Heart left ventricle (tissue), 16 donors: ENCODE measurements at regions of chrX and their contacts with region 1.

Region 1: GRCh38 chrX:136268051-136269048 is 17.1 kb upstream of the MAP7D3 start:
- DNase-seq: peak in 2 of 5 donors; percentile 25 to 28
- ATAC-seq: peak in 3 of 4 donors; percentile 45 to 63 (median 49)
- H3K4me3 ChIP-seq: no peak overlapping the region
- H3K27ac ChIP-seq: no peak overlapping the region
- H3K4me1 ChIP-seq: no peaks in the 10 kb centered on the region
- H3K27me3 ChIP-seq: peaks cover 0 to 5% (median 0%) of the 10 kb centered on the region in 9 donors
- CTCF ChIP-seq: peak; percentile 59 to 82 (median 69)
- POLR2A ChIP-seq: no peak

Region 2: DNA sequence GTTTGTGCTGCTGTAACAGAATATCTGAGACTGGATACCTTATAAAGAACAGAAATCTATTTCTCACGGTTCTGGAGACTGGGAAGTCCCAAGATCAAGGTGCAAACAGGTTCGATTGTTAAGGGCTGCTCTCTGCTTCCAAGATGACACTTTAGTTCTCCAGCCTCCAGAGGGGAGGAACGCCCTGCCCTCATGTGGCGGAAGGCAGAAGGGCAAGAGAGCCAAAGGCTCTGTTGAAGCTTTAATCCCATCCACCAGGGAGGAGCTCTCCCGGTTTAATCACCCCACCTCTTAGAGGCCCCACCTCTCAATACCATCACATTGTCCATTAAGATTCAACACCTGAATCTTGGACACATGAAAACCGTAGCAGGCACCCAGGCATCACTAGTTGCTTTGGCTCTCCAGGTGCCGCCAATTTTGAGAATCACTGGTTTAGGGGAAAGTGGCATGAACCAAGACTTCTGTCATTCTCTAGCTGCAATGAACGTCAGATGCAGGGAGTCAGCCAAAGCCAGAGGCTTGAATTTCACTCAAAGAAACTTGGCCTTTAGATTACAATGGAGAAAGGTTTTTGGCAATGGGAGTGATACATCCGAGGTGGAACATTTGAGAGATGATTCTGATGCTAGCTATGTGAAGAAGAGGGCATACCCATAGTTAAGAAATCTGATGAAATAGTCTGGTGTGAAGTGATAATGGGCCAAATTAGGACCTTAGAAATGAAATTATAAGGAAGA is 105.3 kb before region 1 on chrX:
- intact Hi-C with region 1: loop called in 5 of 10 experiments (anchors 2 to 10 kb)
- DNase-seq: peak; percentile 47 to 70 (median 63)
- ATAC-seq: peak; percentile 41 to 80 (median 78)
- H3K4me3 ChIP-seq: peak overlapping the region in 1 of 12 donors; percentile 0
- H3K27ac ChIP-seq: peak overlapping the region in 10 of 12 donors; percentile 9 to 87 (median 56)
- H3K4me1 ChIP-seq: peaks cover 0 to 76% (median 11%) of the 10 kb centered on the region in 12 donors
- H3K27me3 ChIP-seq: peaks cover 0 to 8% (median 0%) of the 10 kb centered on the region in 9 donors
- CTCF ChIP-seq: peak; percentile 47 to 78 (median 66)
- POLR2A ChIP-seq: no peak

Region 3: DNA sequence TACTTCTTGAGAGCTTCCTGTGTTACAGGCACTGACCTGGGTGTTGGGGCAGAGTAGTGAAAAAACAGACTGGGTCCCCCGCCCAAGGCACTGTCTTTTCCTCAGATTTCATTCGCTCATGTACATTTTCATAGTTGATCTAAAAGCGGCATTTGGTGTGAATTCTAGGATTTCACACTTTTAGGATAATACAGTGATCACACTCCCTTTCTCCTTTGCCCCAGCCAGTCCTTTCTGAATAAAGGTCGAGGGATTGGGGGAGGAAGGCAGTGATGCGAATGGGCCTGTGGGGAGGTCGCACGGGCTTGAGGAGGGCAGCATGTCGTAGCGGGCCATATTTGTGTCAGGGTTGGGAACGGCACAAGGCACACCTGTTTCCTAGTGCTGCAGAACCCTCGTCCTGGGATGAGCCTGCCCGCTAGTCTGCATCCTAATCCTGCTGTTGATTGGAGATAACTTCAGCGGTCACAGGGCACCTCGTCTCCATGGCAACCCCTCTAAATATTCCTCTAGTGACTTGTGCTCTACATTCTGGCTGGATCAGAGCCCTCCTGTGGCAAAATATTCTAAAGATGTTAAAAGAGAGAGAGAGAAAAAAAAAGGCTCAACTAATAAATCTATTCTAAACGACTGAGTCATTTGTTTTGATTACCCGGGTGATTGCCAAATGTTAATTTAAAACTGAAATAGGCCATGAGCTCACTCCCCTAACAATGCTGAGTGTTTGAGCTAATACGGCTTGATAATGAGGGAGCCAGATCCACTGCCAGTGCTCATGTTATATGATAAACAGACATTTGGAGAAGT is 99.2 kb before region 1 on chrX:
- intact Hi-C with region 1: loop called in 7 of 10 experiments (anchors 2 to 10 kb)
- DNase-seq: peak; percentile 53 to 75 (median 63)
- ATAC-seq: peak; percentile 83 to 87 (median 84)
- H3K4me3 ChIP-seq: peak overlapping the region in 8 of 12 donors; percentile 7 to 37 (median 18)
- H3K27ac ChIP-seq: peak overlapping the region; percentile 63 to 95 (median 83)
- H3K4me1 ChIP-seq: peaks cover 0 to 69% (median 24%) of the 10 kb centered on the region in 12 donors
- H3K27me3 ChIP-seq: peaks cover 0 to 8% (median 0%) of the 10 kb centered on the region in 9 donors
- CTCF ChIP-seq: peak in 1 of 12 donors; percentile 4
- POLR2A ChIP-seq: no peak

Region 4: DNA sequence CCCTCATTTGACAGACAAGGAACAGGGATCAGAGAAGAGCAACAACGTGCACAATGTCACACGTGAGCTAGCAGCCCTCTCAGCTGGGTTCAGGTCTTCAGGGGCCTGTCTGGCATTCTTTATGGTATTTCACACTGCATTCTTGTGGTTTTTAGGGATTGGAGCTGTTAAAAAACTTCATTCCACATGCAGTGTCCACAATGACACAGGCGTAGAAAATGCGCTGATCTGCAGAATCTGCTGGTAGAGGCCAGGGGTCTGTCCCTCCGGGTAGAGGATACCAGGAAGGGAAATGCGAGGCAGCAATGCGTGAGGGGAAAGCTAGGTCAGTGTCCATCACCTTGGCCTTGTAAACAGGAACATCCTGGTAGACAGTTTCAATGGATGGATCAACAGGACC is 53.8 kb before region 1 on chrX:
- intact Hi-C with region 1: loop called in 2 of 10 experiments (anchors 5 to 10 kb)
- DNase-seq: no peak
- ATAC-seq: no peak
- H3K4me3 ChIP-seq: no peak overlapping the region
- H3K27ac ChIP-seq: peak overlapping the region in 2 of 12 donors; percentile 29 to 44
- H3K4me1 ChIP-seq: peaks cover 0 to 22% (median 0%) of the 10 kb centered on the region in 12 donors
- H3K27me3 ChIP-seq: peaks cover 0 to 11% (median 0%) of the 10 kb centered on the region in 9 donors
- CTCF ChIP-seq: no peak
- POLR2A ChIP-seq: no peak

Region 5: DNA sequence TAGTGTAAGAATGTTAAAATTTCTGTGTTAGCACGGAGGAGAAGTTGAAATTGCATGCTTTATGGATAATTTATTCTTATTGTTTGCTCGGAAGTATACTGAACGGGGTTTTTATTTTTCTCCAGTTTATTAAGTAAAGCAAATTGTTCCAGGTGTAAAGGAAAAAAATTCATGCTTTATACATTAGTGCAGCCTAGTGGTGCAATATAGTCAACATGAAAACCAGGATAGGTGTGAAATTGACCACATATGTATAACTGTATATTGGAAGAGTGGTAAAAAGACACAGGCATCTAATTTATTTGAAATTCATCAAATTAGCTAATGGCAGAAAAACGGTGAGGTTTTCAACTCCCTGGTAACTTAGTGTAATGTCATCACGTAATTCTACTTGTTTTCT is 220.4 kb after region 1 on chrX:
- intact Hi-C with region 1: loop called in 2 of 10 experiments (anchors 10 kb)
- DNase-seq: no peak
- ATAC-seq: no peak
- H3K4me3 ChIP-seq: no peak overlapping the region
- H3K27ac ChIP-seq: no peak overlapping the region
- H3K4me1 ChIP-seq: no peaks in the 10 kb centered on the region
- H3K27me3 ChIP-seq: peaks cover 0 to 61% (median 0%) of the 10 kb centered on the region in 9 donors
- CTCF ChIP-seq: no peak
- POLR2A ChIP-seq: no peak

Region 6: DNA sequence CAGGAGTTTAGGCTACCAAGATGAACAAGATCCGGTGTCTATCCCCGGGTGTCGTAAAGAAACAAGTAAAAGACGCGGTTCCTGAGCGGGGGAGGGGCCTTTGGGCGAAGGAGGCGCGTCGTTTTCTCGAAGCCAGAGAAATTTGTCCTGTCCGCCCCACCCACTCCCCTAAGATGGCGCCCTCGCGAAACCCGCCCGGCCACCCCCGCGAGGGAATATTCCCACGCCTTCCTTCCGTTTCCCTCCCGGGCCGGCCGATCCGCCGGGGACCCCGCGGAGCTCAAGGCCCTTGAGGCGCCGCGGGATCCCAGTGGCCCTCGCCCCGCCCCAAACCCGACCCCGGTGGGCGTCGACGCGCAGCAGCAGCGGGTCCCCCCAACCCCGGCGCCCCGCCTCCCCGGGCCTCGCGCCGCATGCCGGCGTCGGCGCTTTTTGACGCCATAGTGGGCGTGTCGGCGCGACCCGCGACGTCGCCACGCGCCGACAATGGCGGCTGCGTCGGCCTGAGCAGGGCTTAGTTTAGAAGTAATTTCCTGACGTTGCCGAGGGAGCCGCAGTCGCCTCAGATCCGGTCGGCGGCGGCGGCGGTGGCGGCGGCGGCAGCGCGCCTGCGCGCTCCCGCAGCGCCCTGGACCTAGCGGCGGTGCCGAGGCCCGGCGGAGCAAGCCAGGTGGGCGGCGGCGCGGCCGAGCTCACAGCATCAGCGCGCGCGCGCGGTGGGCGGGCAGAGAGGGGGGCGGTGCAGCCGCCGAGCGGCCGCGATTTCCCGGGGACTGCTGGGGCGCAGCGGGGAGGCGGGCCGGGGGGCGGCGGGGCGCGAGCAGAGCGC is 228.6 kb after region 1 on chrX and contains the start of gene HTATSF1:
- intact Hi-C with region 1: loop called in 1 of 10 experiments (anchors 10 kb)
- DNase-seq: peak; percentile 83 to 89 (median 86)
- ATAC-seq: peak; percentile 78 to 95 (median 92)
- H3K4me3 ChIP-seq: peak within 1 kb of the TSS; percentile 46 to 95 (median 69)
- H3K27ac ChIP-seq: peak within 1 kb of the TSS; percentile 89 to 98 (median 94)
- H3K4me1 ChIP-seq: peaks cover 0 to 21% (median 4%) of the 10 kb centered on the region in 12 donors
- H3K27me3 ChIP-seq: peaks cover 0 to 9% (median 0%) of the 10 kb centered on the region in 9 donors
- CTCF ChIP-seq: no peak
- POLR2A ChIP-seq: peak in 1 of 2 donors; percentile 16
- total RNA-seq, gene HTATSF1: 49.8 to 83.0 (median 66.7) TPM